Activated CD4-positive, alpha-beta T cell treated with anti-CD3 and anti-CD28 coated beads for 36 hours (primary cell): ENCODE measurements at regions of chr14 and their contacts with region 1.

Region 1: GRCh38 chr14:74084277-74085046 is at the starts of genes ALDH6A1 and LIN52:
- DNase-seq: peak; percentile 99
- ATAC-seq: peak; percentile 93
- H3K4me3 Mint-ChIP-seq: peak within 1 kb of the TSS; percentile 95
- H3K27ac Mint-ChIP-seq: peak within 1 kb of the TSS; percentile 95
- H3K4me1 Mint-ChIP-seq: peaks cover 31% of the 10 kb centered on the region
- H3K27me3 Mint-ChIP-seq: no peaks in the 10 kb centered on the region
- total RNA-seq, gene ALDH6A1: 17.2 to 24.6 TPM
- total RNA-seq, gene LIN52: 10.3 to 13.2 TPM

Region 2: DNA sequence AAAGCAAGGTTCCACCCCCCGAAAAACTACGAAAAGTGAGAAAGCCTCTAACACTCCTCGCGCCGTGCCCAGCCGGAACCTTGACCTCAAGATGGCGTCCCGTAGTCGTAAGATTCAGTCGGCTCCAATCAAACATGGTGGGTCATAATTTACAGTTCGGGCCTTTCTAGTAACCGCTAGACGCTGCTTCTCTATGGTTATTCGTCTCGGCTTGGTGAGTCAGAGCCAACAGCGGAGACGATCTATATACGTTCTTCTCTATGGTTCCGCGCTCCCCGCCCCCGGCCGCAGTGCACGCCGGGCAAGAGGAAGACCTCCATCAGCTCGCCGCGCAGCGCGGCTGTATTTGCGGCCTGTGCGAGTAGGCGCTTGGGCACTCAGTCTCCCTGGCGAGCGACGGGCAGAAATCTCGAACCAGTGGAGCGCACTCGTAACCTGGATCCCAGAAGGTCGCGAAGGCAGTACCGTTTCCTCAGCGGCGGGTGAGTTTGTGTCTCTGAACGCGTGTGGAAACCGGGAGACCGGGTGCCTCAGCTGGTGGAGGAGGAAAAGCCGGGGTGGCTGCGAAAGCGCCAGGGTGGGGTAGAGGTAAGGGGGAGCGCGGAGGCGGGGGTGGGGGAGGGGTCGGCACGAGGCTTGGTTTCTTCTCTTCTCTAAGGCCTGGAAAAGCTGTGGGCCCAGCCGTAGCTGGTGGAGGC is 1026.1 kb before region 1 on chr14 and contains the start of gene RBM25:
- CTCF ChIA-PET with region 1: no interaction called
- POLR2A ChIA-PET with region 1: no interaction called
- intact Hi-C with region 1: loop called (anchors 1 to 10 kb)
- DNase-seq: peak; percentile 97
- ATAC-seq: peak; percentile 95
- H3K4me3 Mint-ChIP-seq: no peak within 1 kb of the TSS
- H3K27ac Mint-ChIP-seq: no peak within 1 kb of the TSS
- H3K4me1 Mint-ChIP-seq: peaks cover 31% of the 10 kb centered on the region
- H3K27me3 Mint-ChIP-seq: no peaks in the 10 kb centered on the region
- total RNA-seq, gene RBM25: 95.6 to 115 TPM

Region 3: DNA sequence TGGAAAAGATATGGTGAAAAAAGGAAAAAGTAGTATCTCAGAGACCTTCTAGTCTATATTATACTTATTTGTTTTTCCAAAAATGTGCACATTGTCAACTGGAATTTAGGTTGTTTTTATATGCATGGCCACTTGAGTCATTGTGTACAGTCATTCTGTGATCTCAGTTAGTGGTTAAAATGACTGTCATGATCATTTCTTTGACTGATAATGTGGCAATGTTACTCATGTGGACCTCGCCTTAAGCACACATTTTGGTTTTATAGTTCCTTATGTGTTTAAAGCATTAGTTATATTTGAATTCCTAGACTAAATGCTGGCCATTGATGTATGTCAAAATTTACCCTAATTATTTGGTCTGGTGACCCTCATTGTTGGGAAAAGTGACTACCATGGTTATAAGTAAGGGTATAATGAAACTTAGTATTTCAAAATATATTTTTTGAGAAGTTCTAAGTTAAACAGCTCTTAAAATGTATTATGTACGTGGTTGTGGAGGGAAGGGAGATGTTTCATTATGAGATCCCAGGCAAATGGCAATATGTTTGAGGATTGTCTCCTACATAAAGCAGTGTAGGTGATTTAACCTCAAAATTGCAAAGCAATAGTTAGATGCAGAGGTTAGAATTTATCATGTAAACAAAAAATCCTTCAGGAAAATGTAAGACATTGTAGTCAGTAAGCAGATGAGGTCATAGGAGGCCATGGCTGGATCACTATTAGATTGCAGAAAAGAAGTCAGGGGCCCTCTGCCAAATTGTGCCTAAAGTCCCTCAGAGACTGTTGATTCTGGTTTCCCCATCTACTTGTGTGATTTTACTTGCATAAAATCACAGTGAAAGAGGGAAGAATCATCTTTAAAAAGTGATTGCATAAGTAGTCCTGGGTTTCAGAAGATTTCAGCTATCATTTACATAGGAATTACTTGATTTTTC is 387.7 kb before region 1 on chr14:
- CTCF ChIA-PET with region 1: no interaction called
- POLR2A ChIA-PET with region 1: no interaction called
- intact Hi-C with region 1: loop called in 1 of 2 experiments (anchors 2 kb)
- DNase-seq: no peak
- ATAC-seq: peak; percentile 87
- H3K4me3 Mint-ChIP-seq: peak overlapping the region; percentile 46
- H3K27ac Mint-ChIP-seq: peak overlapping the region; percentile 92
- H3K4me1 Mint-ChIP-seq: peaks cover 50% of the 10 kb centered on the region
- H3K27me3 Mint-ChIP-seq: no peaks in the 10 kb centered on the region

Region 4: DNA sequence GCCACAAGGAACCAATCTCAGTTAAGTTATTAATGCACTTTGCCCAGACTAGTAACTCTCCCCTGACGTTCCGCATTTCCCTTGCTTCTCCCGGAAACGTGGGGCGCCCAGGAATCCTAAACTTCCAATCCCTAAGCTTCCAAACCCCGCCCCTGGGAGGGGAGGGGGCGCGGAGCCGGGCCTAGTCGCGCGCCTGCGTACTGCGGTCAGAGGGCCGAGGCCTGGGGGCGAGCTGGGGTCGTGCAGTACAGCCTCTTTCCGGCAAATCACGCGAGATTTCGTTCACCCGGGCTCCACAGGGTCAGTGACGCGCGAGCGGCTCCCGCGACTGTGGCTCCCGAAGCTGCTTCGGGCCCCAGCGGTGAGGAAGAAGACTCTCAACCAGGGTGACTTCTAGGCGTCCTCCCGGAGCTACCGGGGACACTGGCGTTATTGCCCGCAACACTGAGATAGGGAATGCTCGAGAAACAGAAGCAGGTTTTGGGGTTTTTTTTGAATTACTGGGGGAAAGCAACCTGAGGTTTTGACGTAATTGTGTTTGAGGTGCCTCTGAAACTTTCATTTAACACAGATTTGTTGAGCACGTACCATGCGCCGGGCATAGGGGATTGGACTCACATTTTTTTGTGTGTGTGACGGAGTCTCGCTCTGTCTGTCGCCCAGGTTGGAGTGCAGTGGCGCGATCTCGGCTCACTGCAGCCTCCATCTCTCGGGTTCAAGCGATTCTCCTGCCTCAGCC is 232.6 kb before region 1 on chr14 and contains the start of gene PTGR2:
- CTCF ChIA-PET with region 1: no interaction called
- POLR2A ChIA-PET with region 1: interaction called, 3 read pairs
- intact Hi-C with region 1: loop called (anchors 1 kb)
- DNase-seq: peak; percentile 94
- ATAC-seq: peak; percentile 94
- H3K4me3 Mint-ChIP-seq: peak within 1 kb of the TSS; percentile 98
- H3K27ac Mint-ChIP-seq: peak within 1 kb of the TSS; percentile 100
- H3K4me1 Mint-ChIP-seq: peaks cover 24% of the 10 kb centered on the region
- H3K27me3 Mint-ChIP-seq: no peaks in the 10 kb centered on the region
- total RNA-seq, gene PTGR2: 12.6 to 14.3 TPM

Region 5: DNA sequence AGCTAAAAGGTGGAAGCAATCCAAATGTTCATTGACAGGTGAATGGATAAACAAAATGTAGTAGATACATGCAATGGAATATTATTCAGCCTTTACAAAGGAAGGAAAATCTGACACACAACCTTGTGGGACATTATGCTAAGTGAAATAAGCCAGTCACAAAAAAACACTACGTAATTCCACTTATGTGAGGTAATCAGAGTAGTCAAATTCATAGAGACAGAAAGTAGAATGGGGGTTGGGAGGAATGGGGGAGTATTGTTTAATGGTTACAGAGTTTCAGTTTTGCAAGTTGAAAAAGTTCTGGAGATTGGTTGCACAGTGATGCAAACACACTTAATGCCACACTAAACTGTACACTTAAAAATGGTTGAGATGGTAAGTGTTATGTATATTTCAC is 63.1 kb after region 1 on chr14:
- CTCF ChIA-PET with region 1: no interaction called
- POLR2A ChIA-PET with region 1: no interaction called
- intact Hi-C with region 1: loop called in 1 of 2 experiments (anchors 1 kb)
- DNase-seq: no peak
- ATAC-seq: peak; percentile 53
- H3K4me3 Mint-ChIP-seq: no peak overlapping the region
- H3K27ac Mint-ChIP-seq: no peak overlapping the region
- H3K4me1 Mint-ChIP-seq: peaks cover 17% of the 10 kb centered on the region
- H3K27me3 Mint-ChIP-seq: no peaks in the 10 kb centered on the region

Region 6: DNA sequence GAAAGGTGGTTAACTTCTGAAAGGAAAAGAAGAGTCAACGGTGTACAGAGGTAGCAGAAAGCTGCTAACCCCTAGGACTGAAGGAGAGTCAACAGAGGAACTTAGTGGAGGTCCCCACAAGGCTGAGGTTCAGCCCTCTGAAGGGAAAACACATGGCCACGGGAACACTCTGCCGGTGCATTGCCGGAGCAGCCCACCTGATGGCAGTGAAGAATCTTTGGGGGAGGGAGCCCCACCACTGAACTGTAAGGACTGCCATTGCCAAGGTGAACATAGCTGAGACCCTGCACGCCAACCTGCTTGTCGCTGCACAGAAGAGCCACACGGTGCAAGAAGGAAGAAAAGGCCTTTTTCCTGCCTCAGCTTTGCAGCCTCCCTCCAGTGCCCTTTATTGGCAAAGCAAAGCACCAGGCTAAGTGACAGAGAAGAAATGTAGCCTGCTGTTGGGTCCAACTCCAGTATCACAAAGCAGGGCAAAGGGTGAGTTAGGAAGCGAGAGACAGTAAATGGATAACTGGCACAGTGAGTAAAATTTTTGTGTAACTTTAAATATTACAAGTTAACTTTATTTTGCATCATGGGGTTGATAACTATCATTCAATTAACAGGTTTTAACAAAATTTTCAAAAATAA is 77.2 kb after region 1 on chr14:
- CTCF ChIA-PET with region 1: no interaction called
- POLR2A ChIA-PET with region 1: no interaction called
- intact Hi-C with region 1: no loop called
- DNase-seq: no peak
- ATAC-seq: no peak
- H3K4me3 Mint-ChIP-seq: no peak overlapping the region
- H3K27ac Mint-ChIP-seq: no peak overlapping the region
- H3K4me1 Mint-ChIP-seq: no peaks in the 10 kb centered on the region
- H3K27me3 Mint-ChIP-seq: no peaks in the 10 kb centered on the region

Region 7: DNA sequence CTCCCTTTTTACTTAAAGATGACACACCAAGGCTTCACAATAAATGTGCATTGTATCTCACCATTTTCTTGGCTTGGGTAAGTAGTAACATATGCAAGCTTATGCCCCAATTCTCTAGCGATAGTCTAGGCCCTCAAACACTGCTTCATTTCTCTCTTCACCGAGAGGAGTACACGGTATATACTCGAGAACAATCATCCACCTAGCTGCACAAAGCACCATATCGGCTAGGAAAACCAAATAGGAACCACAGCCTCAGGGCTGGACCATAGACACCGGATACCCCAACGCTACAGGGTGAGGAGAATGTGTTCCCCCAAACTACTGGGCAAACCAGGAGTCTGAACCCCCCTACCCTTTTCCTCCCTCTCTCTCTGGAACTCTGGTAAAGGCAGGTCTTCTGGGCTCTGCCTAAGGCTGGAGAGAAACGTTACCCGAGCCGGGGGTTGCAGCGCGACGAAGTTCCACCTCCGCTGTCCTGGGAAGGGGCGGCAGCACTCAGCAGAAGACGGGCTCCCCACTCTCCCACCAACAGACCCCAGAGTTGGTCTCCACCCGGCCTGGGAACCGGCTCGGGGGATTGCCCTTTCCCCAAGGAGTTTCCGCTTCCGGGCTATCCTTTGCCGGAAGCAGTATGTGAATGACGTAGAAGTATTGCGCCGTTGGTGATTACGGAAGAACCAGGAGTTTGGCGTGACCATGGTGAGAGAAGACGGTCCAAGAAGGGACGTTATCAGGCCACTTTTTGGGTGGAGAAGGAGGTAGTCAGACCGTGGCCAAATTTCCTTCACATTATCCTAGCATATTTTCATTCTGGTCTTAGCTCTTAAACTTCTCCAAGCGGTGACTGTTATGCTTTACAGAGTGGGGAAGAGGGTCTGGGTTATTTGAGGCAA is 628.3 kb after region 1 on chr14 and contains the starts of genes AREL1 and FCF1:
- CTCF ChIA-PET with region 1: no interaction called
- POLR2A ChIA-PET with region 1: no interaction called
- intact Hi-C with region 1: loop called in 1 of 2 experiments (anchors 5 kb)
- DNase-seq: peak; percentile 88
- ATAC-seq: peak; percentile 98
- H3K4me3 Mint-ChIP-seq: peak within 1 kb of the TSS; percentile 98
- H3K27ac Mint-ChIP-seq: peak within 1 kb of the TSS; percentile 98
- H3K4me1 Mint-ChIP-seq: peaks cover 50% of the 10 kb centered on the region
- H3K27me3 Mint-ChIP-seq: no peaks in the 10 kb centered on the region
- total RNA-seq, gene AREL1: 31.3 to 35.6 TPM
- total RNA-seq, gene FCF1: 87.7 to 112 TPM